GM12878 (cell line): ENCODE measurements at regions of chr18 and their contacts with region 1.

Region 1: GRCh38 chr18:47997338-47997780 is 66.9 kb upstream of the SMAD2 start:
- DNase-seq: no peak
- ATAC-seq: no peak; the same call in 2 of the 3 replicates
- H3K4me3 ChIP-seq: no peak overlapping the region
- H3K27ac ChIP-seq: no peak overlapping the region
- H3K4me1 ChIP-seq: no peaks in the 10 kb centered on the region
- H3K27me3 ChIP-seq: no peaks in the 10 kb centered on the region
- CTCF ChIP-seq: peak; percentile 27 to 49 (median 35); a peak in 5 of 6 replicates
- EP300 ChIP-seq: no peak
- POLR2A ChIP-seq: no peak
- RAD21 ChIP-seq: 0 out of 2 replicates have a peak, but pooled peaks have one; percentile 23

Region 2: DNA sequence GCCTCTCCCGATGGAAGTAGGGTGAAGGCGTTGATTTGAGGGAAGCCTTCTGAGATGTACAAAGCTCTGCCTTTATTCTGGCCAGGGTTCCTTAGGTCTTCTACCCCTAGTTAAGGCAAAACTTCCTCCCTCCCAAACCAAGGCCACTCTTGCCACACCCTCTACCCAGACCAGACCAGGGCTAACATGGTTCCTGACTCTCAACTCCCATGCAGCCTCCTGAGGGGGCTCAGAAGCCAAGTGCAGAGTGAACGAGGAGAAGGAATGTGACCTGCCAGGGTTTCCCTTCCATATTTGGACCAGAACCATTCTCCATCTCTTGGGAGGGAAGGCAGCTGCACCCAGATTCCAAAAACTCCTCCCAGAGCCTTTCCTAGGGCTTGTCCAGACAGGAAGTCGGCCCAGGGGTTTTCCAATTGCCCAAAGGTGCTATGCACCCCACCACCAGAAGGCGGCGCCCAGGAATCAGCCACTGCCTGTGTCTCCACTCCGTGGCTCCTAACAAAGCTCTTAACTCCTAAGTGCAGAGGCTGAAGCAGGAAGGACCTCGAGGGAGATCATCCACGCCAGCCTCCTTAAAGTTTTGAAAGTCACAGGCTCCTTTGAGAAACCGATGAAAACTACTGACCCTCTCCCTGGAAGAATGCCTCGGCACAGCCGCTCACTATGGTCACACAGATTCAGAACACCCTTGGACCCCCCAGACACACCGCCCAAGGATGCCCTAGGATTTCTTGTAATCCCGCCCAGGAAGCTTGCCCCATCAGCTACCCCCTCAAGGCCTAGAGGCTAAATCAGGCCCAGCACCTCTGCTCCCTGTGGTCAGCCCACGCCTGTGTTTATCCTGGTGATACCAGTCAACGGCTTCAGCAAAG is 224.7 kb before region 1 on chr18:
- CTCF ChIA-PET with region 1: interaction called, 14 read pairs
- POLR2A ChIA-PET with region 1: no interaction called
- RAD21 ChIA-PET with region 1: interaction called, 5 read pairs
- SMC1A ChIA-PET with region 1: interaction called, 14 read pairs
- in situ Hi-C with region 1: no loop called
- intact Hi-C with region 1: no loop called
- DNase-seq: no peak
- ATAC-seq: peak; percentile 87
- H3K4me3 ChIP-seq: no peak overlapping the region
- H3K27ac ChIP-seq: no peak overlapping the region
- H3K4me1 ChIP-seq: no peaks in the 10 kb centered on the region
- H3K27me3 ChIP-seq: no peaks in the 10 kb centered on the region
- CTCF ChIP-seq: peak; percentile 88 to 99 (median 91)
- EP300 ChIP-seq: no peak
- POLR2A ChIP-seq: no peak
- RAD21 ChIP-seq: peak; percentile 89

Region 3: GRCh38 chr18:47964053-47964452 is 33.3 kb before region 1 on chr18:
- CTCF ChIA-PET with region 1: no interaction called
- POLR2A ChIA-PET with region 1: no interaction called
- RAD21 ChIA-PET with region 1: no interaction called
- SMC1A ChIA-PET with region 1: no interaction called
- in situ Hi-C with region 1: no loop called
- intact Hi-C with region 1: no loop called
- DNase-seq: no peak
- ATAC-seq: no peak
- H3K4me3 ChIP-seq: no peak overlapping the region
- H3K27ac ChIP-seq: no peak overlapping the region
- H3K4me1 ChIP-seq: no peaks in the 10 kb centered on the region
- H3K27me3 ChIP-seq: no peaks in the 10 kb centered on the region
- CTCF ChIP-seq: no peak
- EP300 ChIP-seq: no peak
- POLR2A ChIP-seq: no peak
- RAD21 ChIP-seq: no peak

Region 4: GRCh38 chr18:47986620-47987387 is 10.6 kb before region 1 on chr18:
- CTCF ChIA-PET with region 1: interaction called, 10 read pairs
- POLR2A ChIA-PET with region 1: no interaction called
- RAD21 ChIA-PET with region 1: no interaction called
- SMC1A ChIA-PET with region 1: interaction called, 3 read pairs
- in situ Hi-C with region 1: no loop called
- intact Hi-C with region 1: no loop called
- DNase-seq: no peak
- ATAC-seq: peak; percentile 50
- H3K4me3 ChIP-seq: no peak overlapping the region
- H3K27ac ChIP-seq: no peak overlapping the region
- H3K4me1 ChIP-seq: no peaks in the 10 kb centered on the region
- H3K27me3 ChIP-seq: peaks cover 0 to 4% of the 10 kb centered on the region in 2 experiments; a peak in 2 of 4 replicates
- CTCF ChIP-seq: no peak
- EP300 ChIP-seq: no peak
- POLR2A ChIP-seq: no peak
- RAD21 ChIP-seq: no peak